Activated T-helper 1 cell treated with anti-CD3 and anti-CD28 coated beads, Interleukin-12 subunit alpha, Interleukin-12 subunit beta, Interleukin-2, Interleukin-4 antibody, amounts not matched to agents 30 ng/mL and 10 ng/mL and 1 ng/mL, durations not matched to agents 14 hours and 24 hours and 36 hours (primary cell): ENCODE measurements at regions of chr21 and their contacts with region 1.

Region 1: GRCh38 chr21:31426235-31426797 is 82.3 kb upstream of the TIAM1 start:
- DNase-seq: peak; percentile 2
- H3K4me3 Mint-ChIP-seq: peak overlapping the region; percentile 50
- H3K27ac Mint-ChIP-seq: peak overlapping the region; percentile 64
- H3K4me1 Mint-ChIP-seq: peaks cover 16% of the 10 kb centered on the region
- H3K27me3 Mint-ChIP-seq: peaks cover 10% of the 10 kb centered on the region

Region 2: DNA sequence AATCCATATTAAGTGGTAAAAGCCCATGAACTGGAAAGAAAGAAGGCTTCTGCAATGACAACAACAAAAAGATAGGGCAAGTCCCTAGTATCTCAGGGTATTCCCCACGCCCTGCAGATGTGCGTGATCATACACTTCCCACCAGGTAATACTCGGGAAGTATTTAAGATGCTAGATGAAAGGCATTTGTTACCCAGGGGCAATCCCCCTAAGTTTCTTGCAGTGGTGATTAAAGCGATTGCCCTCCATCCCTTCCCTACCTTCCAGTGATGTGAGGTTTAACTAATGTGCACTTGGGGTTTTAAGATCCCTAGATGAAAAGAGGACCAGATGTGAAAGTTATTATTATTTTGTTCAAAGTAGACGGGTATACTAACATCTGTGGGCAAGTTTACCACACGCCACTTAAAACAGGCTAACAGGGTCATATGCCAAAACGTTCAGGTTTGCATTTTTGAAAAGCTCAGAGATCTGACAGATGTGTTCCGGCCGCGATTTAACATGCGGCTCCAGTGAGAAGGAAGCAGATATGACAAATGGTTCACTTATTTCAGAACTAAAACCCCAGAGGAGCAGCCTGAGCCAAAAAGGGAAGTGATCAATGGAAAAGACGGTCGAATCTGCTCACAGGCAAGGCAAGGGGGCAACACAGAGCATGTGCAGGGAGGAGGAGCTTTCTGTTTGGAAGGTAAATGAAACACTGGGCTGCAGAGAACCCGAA is 99.6 kb before region 1 on chr21:
- intact Hi-C with region 1: loop called (anchors 1 kb)
- DNase-seq: peak; percentile 37
- H3K4me3 Mint-ChIP-seq: peak overlapping the region; percentile 37
- H3K27ac Mint-ChIP-seq: peak overlapping the region; percentile 82
- H3K4me1 Mint-ChIP-seq: peaks cover 43% of the 10 kb centered on the region
- H3K27me3 Mint-ChIP-seq: no peaks in the 10 kb centered on the region

Region 3: DNA sequence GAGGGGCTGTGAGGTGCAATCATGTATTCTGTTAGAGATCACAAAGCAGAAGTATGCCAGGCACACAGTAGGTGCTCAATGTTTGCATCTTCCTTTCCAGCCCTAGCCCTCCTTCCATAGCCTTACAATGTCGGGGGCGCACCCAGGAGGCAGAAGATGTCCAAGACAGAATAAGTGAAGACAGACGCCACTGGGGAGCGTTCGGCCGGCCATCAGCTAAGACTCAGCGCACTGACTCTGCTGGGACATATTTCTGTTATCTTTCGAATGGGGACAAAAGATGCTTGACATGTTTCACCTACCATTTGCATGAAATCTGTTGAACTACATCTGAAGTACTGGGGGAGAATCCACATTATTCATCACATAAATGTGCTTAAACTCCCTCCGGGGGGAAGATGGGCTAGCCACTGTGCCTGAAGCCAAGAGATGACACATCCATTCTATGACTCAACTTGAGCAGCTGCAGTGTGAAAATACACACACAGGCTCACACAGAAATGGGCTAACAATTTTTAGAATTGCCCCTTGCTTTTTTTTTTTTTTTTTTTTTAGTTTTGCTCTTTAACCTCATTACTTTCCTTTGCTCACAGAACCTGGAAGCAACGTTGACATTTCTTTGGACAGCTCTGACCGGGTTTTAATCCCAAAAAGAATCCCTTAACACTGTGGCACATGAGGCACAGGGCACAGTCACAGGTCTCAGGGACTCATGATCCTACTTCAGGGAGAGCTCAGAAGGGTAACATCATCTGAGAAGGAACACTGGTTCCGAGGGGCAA is 90.2 kb before region 1 on chr21:
- intact Hi-C with region 1: loop called (anchors 1 kb)
- DNase-seq: no peak
- H3K4me3 Mint-ChIP-seq: peak overlapping the region; percentile 17
- H3K27ac Mint-ChIP-seq: peak overlapping the region; percentile 67
- H3K4me1 Mint-ChIP-seq: peaks cover 78% of the 10 kb centered on the region
- H3K27me3 Mint-ChIP-seq: no peaks in the 10 kb centered on the region

Region 4: GRCh38 chr21:31397515-31397926 is 28.8 kb before region 1 on chr21:
- intact Hi-C with region 1: loop called (anchors 2 kb)
- DNase-seq: no peak
- H3K4me3 Mint-ChIP-seq: no peak overlapping the region
- H3K27ac Mint-ChIP-seq: no peak overlapping the region
- H3K4me1 Mint-ChIP-seq: peaks cover 43% of the 10 kb centered on the region
- H3K27me3 Mint-ChIP-seq: peaks cover 3% of the 10 kb centered on the region

Region 5: DNA sequence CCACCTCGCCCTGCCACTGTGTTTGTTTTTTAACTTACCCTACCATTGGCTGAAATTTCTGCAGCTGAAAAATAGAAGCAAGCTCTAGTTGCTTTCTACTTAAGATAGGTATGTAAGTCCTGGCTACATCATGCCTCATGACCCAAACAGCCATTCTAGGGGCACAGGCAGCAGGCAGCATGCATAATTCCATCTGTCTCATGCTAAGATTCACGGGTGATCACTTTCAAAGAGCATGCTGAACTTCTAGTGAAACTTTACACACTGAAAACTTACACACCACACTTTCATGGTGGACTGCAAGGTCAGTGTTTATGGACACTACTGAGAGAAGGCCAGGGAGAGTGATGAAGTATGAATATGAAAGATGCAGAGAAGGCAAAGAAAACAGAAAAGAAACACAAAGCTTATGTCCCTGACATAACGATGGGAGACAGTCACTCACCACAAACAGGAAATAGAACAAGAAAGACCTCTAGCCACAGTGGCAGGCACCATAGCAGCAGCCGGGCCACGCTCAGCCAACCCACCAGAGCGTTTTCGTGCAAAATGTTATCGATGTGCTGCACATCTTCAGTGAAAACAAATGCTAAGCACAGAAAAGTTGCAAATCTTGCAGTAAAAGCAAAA is 20.0 kb after region 1 on chr21:
- intact Hi-C with region 1: loop called (anchors 2 kb)
- DNase-seq: peak; percentile 49
- H3K4me3 Mint-ChIP-seq: peak overlapping the region; percentile 68
- H3K27ac Mint-ChIP-seq: peak overlapping the region; percentile 91
- H3K4me1 Mint-ChIP-seq: peaks cover 47% of the 10 kb centered on the region
- H3K27me3 Mint-ChIP-seq: peaks cover 6% of the 10 kb centered on the region